ENCODE measurements at regions of chr3 and their contacts with region 1.

Region 1: DNA sequence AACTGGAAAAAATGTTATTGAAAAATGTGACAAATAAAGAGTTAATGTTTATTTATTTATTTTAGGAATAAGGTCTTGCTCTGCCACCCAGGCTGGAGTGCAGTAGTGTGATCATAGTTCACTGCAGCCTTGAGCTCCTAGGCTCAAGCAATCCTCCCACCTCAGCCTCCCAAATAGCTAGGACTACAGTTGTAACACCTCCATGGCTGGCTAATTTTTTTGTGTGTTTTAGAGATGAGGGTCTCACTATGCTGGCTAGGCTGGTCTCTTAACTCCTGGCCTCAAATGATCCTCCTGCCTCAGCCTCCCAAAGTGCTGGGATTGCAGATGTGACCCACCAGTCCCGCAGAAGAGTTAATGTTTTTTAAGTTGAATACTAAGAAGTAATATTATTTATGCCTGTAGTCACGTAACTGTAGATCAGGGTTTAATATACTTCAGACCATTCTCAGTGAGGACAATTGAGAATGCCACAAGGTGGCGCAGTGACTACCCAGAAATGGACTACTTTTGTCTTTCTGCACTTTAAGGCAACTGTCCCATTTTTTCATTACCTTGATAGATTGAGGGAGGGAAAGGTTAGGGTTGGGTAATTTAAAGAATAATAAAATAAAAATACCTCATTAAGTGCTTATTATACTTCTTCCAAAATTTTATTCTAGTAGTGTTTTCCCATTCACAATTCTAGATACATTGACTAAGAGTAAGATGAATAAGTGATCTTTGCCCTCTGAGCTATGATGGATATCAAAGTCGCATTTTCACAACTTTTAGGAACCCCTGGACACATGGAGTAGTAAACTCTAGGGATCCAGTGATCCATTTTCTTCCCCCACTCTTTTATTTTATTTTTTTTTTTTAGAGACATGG is 6.0 kb downstream of the MUC13 start:
- DNase-seq: peak; percentile 50 to 79 (median 60)
- ATAC-seq: peak in 2 of 4 donors; percentile 68 to 76
- H3K4me3 ChIP-seq: no peak overlapping the region
- H3K27ac ChIP-seq: no peak overlapping the region
- H3K4me1 ChIP-seq: peaks cover 0 to 11% (median 0%) of the 10 kb centered on the region in 12 donors
- H3K27me3 ChIP-seq: no peaks in the 10 kb centered on the region
- CTCF ChIP-seq: peak; percentile 61 to 87 (median 75)
- POLR2A ChIP-seq: no peak

Region 2: GRCh38 chr3:124791639-124792151 is 136.9 kb before region 1 on chr3:
- intact Hi-C with region 1: no loop called
- DNase-seq: peak in 4 of 5 donors; percentile 39 to 66 (median 58)
- ATAC-seq: peak; percentile 37 to 72 (median 70)
- H3K4me3 ChIP-seq: no peak overlapping the region
- H3K27ac ChIP-seq: peak overlapping the region in 11 of 12 donors; percentile 24 to 85 (median 64)
- H3K4me1 ChIP-seq: peaks cover 9 to 61% (median 54%) of the 10 kb centered on the region in 12 donors
- H3K27me3 ChIP-seq: no peaks in the 10 kb centered on the region
- CTCF ChIP-seq: no peak
- POLR2A ChIP-seq: no peak

Region 3: GRCh38 chr3:124986158-124987143 is 57.9 kb after region 1 on chr3:
- intact Hi-C with region 1: loop called in 2 of 10 experiments (anchors 5 kb)
- DNase-seq: peak in 1 of 5 donors; percentile 38
- ATAC-seq: peak in 3 of 4 donors; percentile 38 to 59 (median 47)
- H3K4me3 ChIP-seq: no peak overlapping the region
- H3K27ac ChIP-seq: peak overlapping the region in 11 of 12 donors; percentile 17 to 83 (median 55)
- H3K4me1 ChIP-seq: peaks cover 4 to 48% (median 22%) of the 10 kb centered on the region in 12 donors
- H3K27me3 ChIP-seq: no peaks in the 10 kb centered on the region
- CTCF ChIP-seq: peak; percentile 16 to 57 (median 36)
- POLR2A ChIP-seq: no peak